Ascending aorta (tissue), 2 donors: ENCODE measurements at regions of chr10 and their contacts with region 1.

Region 1: GRCh38 chr10:77111611-77112550 is 525.7 kb downstream of the KCNMA1 start:
- DNase-seq: no peak
- H3K4me3 ChIP-seq: no peak overlapping the region
- H3K27ac ChIP-seq: peak overlapping the region; percentile 75 to 82
- H3K4me1 ChIP-seq: peaks cover 14 to 31% of the 10 kb centered on the region in 2 donors
- H3K27me3 ChIP-seq: no peaks in the 10 kb centered on the region
- CTCF ChIP-seq: peak; percentile 73 to 86 (median 76)

Region 2: GRCh38 chr10:76311752-76312636 is 799.9 kb before region 1 on chr10:
- intact Hi-C with region 1: loop called (anchors 10 kb)
- DNase-seq: no peak
- H3K4me3 ChIP-seq: no peak overlapping the region
- H3K27ac ChIP-seq: peak overlapping the region; percentile 72
- H3K4me1 ChIP-seq: peaks cover 5 to 30% of the 10 kb centered on the region in 2 donors
- H3K27me3 ChIP-seq: no peaks in the 10 kb centered on the region
- CTCF ChIP-seq: peak in 2 of 3 experiments; percentile 22 to 30

Region 3: DNA sequence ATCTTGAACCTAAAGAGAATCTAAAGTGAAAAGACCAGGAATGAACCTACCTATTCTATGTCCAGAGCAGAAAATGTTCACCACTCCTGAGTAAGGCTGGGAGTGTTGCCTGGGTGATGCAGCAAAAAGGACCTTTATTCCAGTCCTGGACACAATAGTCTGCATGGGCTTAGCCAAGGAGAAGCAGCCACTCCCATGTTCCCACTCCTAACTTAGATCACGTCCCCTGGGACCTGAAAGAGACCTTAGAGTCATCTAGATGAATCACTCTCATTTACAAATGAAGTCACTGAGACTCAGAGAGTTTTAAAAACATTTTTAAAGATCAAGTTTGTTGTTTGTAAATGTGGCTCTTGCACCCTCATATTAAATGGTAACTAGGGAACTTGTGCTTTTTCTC is 237.7 kb before region 1 on chr10:
- intact Hi-C with region 1: loop called (anchors 5 kb)
- DNase-seq: peak; percentile 39 to 92
- H3K4me3 ChIP-seq: no peak overlapping the region
- H3K27ac ChIP-seq: peak overlapping the region; percentile 70 to 83
- H3K4me1 ChIP-seq: peaks cover 2 to 12% of the 10 kb centered on the region in 2 donors
- H3K27me3 ChIP-seq: no peaks in the 10 kb centered on the region
- CTCF ChIP-seq: no peak

Region 4: DNA sequence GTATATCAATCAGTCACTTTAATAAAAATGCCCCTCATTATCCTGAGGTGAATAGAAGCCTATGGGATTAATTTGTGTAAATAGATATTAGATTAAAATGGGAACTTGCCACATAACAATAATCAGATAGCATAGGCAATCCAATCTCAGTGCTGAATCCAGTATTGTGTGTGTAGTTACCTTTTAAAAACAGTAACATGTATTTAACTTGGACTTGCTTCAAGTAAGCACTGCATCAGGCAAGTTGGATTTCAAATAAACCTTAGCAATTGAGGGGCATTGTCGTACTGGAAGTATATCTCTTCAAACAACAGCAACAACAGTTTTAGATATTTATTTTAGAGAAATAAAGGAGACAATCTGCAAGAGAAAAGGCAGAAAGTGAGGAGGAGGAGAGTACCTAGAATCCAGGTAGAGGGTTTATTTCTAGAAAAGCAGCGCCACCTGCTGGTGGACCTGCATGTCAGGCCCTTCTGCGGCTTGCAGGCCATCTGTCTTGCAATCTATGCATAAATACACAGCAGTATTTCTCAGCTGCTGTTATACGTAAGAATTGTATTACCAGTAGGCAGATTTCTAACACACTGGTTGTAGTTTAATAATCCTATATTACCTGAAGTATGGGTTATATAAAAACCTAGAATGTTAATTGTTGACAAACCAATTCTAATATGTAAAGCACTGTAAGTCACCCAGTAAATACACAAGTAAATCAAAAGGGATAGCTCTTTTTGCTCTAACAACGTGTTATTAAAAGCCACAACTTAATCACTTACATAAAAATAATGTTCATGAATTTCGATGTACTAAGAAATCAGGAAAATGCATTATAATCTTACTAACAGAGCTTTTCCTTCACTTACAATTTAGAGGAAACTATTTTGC is 127.1 kb before region 1 on chr10:
- intact Hi-C with region 1: loop called (anchors 5 kb)
- DNase-seq: peak in 1 of 2 donors; percentile 72
- H3K4me3 ChIP-seq: no peak overlapping the region
- H3K27ac ChIP-seq: no peak overlapping the region
- H3K4me1 ChIP-seq: peaks cover 0 to 2% of the 10 kb centered on the region in 2 donors
- H3K27me3 ChIP-seq: no peaks in the 10 kb centered on the region
- CTCF ChIP-seq: peak; percentile 61 to 91 (median 79)

Region 5: GRCh38 chr10:77011874-77012811 is 99.7 kb before region 1 on chr10:
- intact Hi-C with region 1: loop called (anchors 2 kb)
- DNase-seq: peak in 1 of 2 donors; percentile 73
- H3K4me3 ChIP-seq: peak overlapping the region in 1 of 2 donors; percentile 4
- H3K27ac ChIP-seq: peak overlapping the region; percentile 87 to 94
- H3K4me1 ChIP-seq: peaks cover 14 to 38% of the 10 kb centered on the region in 2 donors
- H3K27me3 ChIP-seq: no peaks in the 10 kb centered on the region
- CTCF ChIP-seq: no peak